AG04449 (cell line): ENCODE measurements at regions of chr17 and their contacts with region 1.

Region 1: GRCh38 chr17:979538-980405 is at the start of gene NXN:
- DNase-seq: no peak
- H3K4me3 ChIP-seq: peak within 1 kb of the TSS; percentile 87
- CTCF ChIP-seq: peak; percentile 47

Region 2: DNA sequence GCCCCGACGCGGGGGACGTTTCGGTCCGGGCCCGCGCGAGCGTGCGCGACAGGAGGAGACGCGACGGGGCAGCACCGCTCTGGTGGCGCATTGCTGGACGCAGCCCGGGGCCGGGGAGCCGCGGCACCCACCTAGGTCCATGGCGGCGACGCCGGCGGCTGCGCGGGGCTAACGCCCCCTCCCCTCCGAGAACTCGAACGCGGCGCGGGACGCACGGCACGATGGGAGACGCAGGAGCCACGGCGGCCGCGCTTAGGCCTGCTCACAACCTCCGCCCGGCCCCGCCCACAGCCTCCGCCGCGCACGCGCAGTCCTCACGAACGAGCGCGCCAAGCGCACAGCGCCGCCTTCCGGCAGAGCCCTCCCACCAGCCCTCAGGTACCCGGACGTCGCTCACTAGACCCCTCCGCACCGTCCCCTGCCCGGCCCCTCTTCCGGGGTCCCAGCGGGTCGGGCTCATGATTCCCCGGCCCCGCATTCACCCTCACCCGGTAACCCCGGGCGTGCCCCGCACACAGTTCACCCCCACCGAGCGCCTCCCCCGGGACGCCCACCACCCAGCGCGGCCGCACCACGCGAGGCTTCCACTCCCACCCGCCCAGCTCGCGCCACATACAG is 227.7 kb before region 1 on chr17 and contains the start of gene GEMIN4:
- CTCF ChIA-PET with region 1: interaction called, 53 read pairs
- POLR2A ChIA-PET with region 1: no interaction called
- DNase-seq: no peak
- H3K4me3 ChIP-seq: peak within 1 kb of the TSS; percentile 72
- CTCF ChIP-seq: peak; percentile 98

Region 3: GRCh38 chr17:781805-782731 is 197.7 kb before region 1 on chr17 and contains the starts of genes GLOD4 and MRM3:
- CTCF ChIA-PET with region 1: interaction called, 104 read pairs
- POLR2A ChIA-PET with region 1: interaction called, 7 read pairs
- DNase-seq: no peak
- H3K4me3 ChIP-seq: peak within 1 kb of the TSS; percentile 98
- CTCF ChIP-seq: no peak

Region 4: DNA sequence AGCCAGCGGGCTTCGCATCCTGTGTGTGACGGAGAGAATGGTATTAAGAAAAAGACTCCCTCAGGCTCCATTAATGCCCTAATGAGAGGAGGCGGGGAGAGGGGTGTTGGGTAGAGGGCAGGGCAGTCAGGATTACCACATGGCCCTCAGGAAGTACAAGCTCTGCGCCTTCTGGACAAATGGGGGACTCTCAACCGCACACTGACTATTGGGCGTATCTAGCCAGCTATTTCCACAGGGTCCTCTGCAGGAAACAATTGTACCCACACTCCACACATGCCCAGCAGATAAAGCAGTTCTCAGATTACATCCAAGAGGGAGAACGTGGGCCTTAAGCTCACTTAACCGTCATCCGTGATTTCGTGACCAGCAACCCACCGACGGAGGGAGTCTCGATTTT is 14.9 kb before region 1 on chr17:
- CTCF ChIA-PET with region 1: interaction called, 15 read pairs
- POLR2A ChIA-PET with region 1: interaction called, 3 read pairs
- DNase-seq: no peak
- H3K4me3 ChIP-seq: no peak overlapping the region; the same call in 1 of the 2 replicates
- CTCF ChIP-seq: no peak

Region 5: DNA sequence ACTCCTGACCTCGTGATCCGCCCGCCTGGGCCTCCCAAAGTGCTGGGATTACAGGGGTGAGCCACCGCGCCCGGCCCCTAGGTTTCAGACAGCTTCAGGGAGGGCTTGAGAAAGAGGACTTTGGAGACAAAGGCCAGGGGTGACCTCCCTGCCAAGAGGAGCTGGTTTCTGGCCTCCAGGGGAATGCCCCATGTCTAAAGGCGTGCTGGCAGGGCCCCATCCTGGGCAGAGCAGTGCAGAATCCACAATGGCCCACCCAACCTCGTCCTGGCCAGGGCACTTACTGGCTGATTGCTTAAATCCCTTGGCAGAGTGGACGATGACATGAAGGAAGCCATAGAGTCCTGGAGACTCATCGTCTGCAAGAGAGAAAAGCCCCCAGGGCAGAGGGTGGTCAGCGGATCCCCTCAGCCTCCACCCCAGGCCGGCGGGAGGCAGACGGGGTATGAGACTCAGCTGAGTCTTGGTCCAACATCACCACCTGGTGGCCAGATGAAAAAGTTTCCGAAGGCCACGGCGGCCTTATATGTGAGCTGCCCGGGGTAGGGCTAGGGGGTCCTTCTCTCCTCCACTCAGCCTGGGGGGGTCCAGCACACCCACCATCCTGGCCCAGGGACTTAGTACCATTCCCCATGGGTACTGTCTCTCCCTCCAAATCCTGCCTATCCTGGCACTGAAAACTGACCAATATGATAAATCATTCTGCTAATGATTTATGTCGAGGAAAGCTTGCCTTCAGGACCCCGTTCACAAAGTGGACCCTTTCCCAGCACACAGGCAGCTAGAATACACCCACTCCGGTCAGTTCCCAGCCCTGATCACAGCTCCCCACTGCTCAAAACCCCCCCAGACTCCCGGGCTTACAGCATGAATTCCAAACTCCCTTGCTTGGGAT is 76.2 kb after region 1 on chr17:
- CTCF ChIA-PET with region 1: interaction called, 14 read pairs
- POLR2A ChIA-PET with region 1: no interaction called
- DNase-seq: no peak
- H3K4me3 ChIP-seq: no peak overlapping the region
- CTCF ChIP-seq: peak; percentile 76